ENCODE measurements at regions of chr5 and their contacts with region 1.

Region 1: GRCh38 chr5:77356740-77357139 is 135.4 kb downstream of the WDR41 start:
- DNase-seq: no peak
- ATAC-seq: no peak
- H3K4me3 ChIP-seq: no peak overlapping the region
- H3K27ac ChIP-seq: peak overlapping the region; percentile 59 to 76
- H3K4me1 ChIP-seq: peaks cover 4 to 5% of the 10 kb centered on the region in 2 donors
- H3K27me3 ChIP-seq: no peaks in the 10 kb centered on the region

Region 2: DNA sequence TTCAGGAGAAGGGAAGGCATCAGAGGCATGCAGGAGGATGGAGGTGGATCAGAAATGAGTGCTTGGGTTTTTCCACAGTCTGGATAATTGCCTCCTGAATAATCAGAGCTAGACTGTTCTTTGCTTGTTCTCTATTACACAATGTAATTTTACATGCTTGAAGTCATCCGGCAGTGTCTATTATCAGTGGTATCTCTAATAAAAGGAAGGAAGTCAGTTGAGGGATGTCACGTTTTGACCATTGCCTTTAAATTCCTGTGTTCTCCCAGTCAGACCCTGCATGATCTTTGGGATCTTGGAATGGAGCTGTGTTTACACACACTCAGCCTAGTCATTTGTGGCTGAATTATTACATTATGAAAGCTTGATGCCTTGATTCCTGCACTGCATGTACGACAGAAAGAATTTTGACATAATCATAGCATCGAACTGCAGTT is 55.3 kb before region 1 on chr5:
- intact Hi-C with region 1: loop called in 1 of 2 experiments (anchors 10 kb)
- DNase-seq: no peak
- ATAC-seq: no peak
- H3K4me3 ChIP-seq: no peak overlapping the region
- H3K27ac ChIP-seq: peak overlapping the region in 1 of 2 donors; percentile 21
- H3K4me1 ChIP-seq: peaks cover 0 to 8% of the 10 kb centered on the region in 2 donors
- H3K27me3 ChIP-seq: no peaks in the 10 kb centered on the region

Region 3: GRCh38 chr5:77418601-77419591 is 62.2 kb after region 1 on chr5:
- intact Hi-C with region 1: loop called in 1 of 2 experiments (anchors 5 kb)
- DNase-seq: peak in 1 of 2 donors; percentile 82
- ATAC-seq: peak; percentile 73
- H3K4me3 ChIP-seq: no peak overlapping the region
- H3K27ac ChIP-seq: peak overlapping the region; percentile 50 to 98
- H3K4me1 ChIP-seq: peaks cover 6 to 16% of the 10 kb centered on the region in 2 donors
- H3K27me3 ChIP-seq: no peaks in the 10 kb centered on the region

Measured in aorta (tissue), 5 donors.